ENCODE measurements at regions of chr18 and their contacts with region 1.

Region 1: DNA sequence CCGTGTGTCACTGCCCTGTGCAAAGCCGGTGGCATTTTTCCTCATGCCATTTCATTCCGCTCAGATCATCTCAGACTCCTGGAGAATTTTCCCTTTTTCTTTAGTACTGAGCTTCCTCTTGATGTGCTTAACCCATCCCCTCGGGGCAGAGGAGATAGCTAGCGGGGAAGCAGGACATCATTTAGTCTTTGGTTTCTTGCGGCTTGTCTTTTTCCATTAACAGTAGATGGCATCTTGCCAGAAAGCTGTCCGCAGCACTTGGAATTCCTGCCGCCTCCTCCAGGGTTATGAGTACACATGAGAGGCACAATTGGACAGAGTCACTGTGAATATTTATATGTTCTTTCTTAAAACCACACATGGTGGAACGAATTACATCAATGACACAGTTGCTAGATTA is 226.6 kb downstream of the ALPK2 start:
- DNase-seq: no peak
- H3K4me3 Mint-ChIP-seq: no peak overlapping the region
- H3K27ac Mint-ChIP-seq: no peak overlapping the region
- H3K4me1 Mint-ChIP-seq: peaks cover 25% of the 10 kb centered on the region
- H3K27me3 Mint-ChIP-seq: no peaks in the 10 kb centered on the region

Region 2: DNA sequence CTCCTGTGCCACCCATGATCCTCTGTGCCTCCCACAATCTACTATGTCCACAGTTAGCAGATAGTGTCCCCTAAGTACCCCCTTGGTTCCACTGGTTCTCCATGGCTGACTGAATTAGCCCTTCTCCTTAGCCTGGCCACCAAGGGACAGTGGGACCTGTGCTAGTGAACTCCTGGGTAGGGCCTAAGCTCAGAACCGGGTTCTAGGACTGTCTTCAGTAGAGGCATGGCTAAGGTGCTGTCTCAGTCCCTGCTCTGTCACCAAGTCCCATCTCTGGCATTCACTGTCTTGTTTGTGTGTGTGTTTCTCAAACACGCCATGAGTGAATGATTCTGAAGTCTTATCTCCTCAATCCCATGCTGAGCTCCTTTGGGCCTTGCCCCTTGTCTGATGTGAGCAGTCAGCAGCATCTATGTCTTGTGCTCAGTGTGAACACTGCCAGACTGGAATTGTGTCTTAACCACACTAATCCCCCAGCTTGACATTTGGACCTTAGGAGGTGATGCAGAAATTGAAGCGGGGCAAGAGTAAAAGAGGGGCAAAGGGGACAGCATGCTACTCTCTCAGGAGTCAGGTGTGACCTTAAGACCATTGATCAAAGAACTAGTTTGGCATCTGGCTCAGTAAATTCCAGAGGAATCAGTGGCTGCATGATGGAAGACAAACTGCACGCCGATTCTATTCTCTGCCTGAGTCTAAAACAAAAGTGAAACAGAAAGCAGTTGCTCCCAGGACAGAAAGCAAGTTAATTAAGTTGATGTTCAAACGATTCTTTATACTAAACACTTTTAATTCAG is 36.1 kb after region 1 on chr18:
- CTCF ChIA-PET with region 1: interaction called, 3 read pairs
- intact Hi-C with region 1: loop called (anchors 2 kb)
- DNase-seq: peak; percentile 10
- H3K4me3 Mint-ChIP-seq: peak overlapping the region; percentile 56
- H3K27ac Mint-ChIP-seq: peak overlapping the region; percentile 51
- H3K4me1 Mint-ChIP-seq: peaks cover 12% of the 10 kb centered on the region
- H3K27me3 Mint-ChIP-seq: no peaks in the 10 kb centered on the region

Region 3: DNA sequence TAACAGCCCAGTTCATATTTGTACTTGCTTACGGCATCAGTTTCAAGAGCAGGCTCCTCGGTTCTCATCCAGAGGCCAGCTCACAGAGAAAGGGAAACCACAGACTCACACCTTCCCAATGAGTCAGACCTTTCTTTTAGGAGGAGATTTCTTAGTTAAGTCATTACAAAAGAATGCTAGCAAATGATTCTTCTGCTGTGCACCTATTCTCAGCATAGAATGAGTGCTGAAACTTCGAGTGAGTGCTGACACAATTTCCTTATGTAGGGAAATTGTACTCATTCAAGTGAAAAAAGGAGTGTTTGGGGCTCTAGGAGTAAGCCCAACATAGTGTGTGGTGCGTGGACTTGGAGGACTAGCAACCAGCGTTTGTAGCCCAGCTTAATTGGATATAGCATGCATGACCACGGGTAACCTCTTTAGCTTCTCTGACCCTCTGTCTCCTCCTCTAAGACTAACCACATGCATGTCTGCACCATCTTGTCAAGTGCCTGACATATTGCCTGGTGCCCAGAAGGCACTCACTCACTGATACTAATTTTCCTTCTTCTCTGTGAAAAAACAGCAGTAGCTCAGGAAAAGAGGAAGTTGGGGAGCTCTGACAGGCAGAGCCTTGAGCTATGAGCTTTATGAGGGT is 139.7 kb after region 1 on chr18:
- CTCF ChIA-PET with region 1: no interaction called
- intact Hi-C with region 1: no loop called
- DNase-seq: peak; percentile 87
- H3K4me3 Mint-ChIP-seq: no peak overlapping the region
- H3K27ac Mint-ChIP-seq: peak overlapping the region; percentile 88
- H3K4me1 Mint-ChIP-seq: peaks cover 83% of the 10 kb centered on the region
- H3K27me3 Mint-ChIP-seq: no peaks in the 10 kb centered on the region